CD14-positive monocyte (primary cell): ENCODE measurements at regions of chr1 and their contacts with region 1.

Region 1: GRCh38 chr1:235415008-235415904 is 48.0 kb downstream of the TBCE start:
- DNase-seq: peak; percentile 40 to 57 (median 54)
- H3K4me3 ChIP-seq: no peak overlapping the region
- H3K4me3 Mint-ChIP-seq: no peak overlapping the region
- H3K27ac ChIP-seq: no peak overlapping the region
- H3K27ac Mint-ChIP-seq: no peak overlapping the region
- H3K4me1 ChIP-seq: no peaks in the 10 kb centered on the region
- H3K4me1 Mint-ChIP-seq: peaks cover 6% of the 10 kb centered on the region
- H3K27me3 ChIP-seq: no peaks in the 10 kb centered on the region
- H3K27me3 Mint-ChIP-seq: no peaks in the 10 kb centered on the region
- CTCF ChIP-seq: peak; percentile 88

Region 2: GRCh38 chr1:234486498-234487448 is 928.5 kb before region 1 on chr1:
- intact Hi-C with region 1: loop called in 1 of 2 experiments (anchors 10 kb)
- DNase-seq: peak; percentile 26 to 55 (median 54)
- H3K4me3 ChIP-seq: no peak overlapping the region
- H3K4me3 Mint-ChIP-seq: no peak overlapping the region
- H3K27ac ChIP-seq: no peak overlapping the region
- H3K27ac Mint-ChIP-seq: no peak overlapping the region
- H3K4me1 ChIP-seq: peaks cover 31 to 33% of the 10 kb centered on the region in 2 donors
- H3K4me1 Mint-ChIP-seq: peaks cover 32% of the 10 kb centered on the region
- H3K27me3 ChIP-seq: no peaks in the 10 kb centered on the region
- H3K27me3 Mint-ChIP-seq: peaks cover 0 to 9% (median 5%) of the 10 kb centered on the region in 3 donors
- CTCF ChIP-seq: peak; percentile 68

Region 3: GRCh38 chr1:235105051-235106043 is 309.9 kb before region 1 on chr1:
- intact Hi-C with region 1: loop called in 1 of 2 experiments (anchors 10 kb)
- DNase-seq: no peak
- H3K4me3 ChIP-seq: no peak overlapping the region
- H3K4me3 Mint-ChIP-seq: no peak overlapping the region
- H3K27ac ChIP-seq: no peak overlapping the region
- H3K27ac Mint-ChIP-seq: no peak overlapping the region
- H3K4me1 ChIP-seq: peaks cover 7 to 9% of the 10 kb centered on the region in 2 donors
- H3K4me1 Mint-ChIP-seq: peaks cover 22% of the 10 kb centered on the region
- H3K27me3 ChIP-seq: no peaks in the 10 kb centered on the region
- H3K27me3 Mint-ChIP-seq: peaks cover 2 to 8% (median 3%) of the 10 kb centered on the region in 3 donors
- CTCF ChIP-seq: no peak

Region 4: DNA sequence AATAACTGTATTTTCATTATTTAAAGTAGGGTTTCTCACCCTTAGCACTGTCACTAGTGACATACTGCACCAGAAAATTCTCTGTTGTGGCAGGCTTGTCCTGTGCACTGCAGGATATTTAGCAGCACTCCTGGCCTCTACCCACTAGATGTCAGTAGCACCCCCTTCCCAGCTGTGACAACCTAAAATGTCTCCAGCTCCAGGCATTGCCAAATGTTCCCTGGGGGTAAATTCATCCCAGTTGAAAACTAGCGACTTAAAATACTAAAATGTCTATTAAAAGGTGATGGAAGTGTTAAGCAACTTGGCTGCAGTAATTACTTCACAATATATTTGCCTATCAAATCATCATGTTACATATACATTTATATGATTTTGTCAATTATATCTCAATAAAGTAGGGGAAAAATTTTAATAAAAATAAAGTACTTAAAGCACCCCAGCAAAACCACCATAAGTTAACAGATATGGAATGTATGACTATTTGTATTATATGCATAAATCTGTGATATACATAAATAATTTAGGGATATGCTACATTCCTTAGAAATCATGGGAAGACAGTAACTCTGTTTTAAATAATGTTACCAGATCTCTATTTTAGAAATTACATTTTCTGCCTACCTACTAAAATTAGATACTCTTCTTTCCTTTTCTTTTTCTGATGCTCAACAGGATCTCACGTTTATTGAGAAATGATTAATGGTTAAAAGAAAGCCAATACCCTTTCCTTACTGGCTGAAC is 161.9 kb before region 1 on chr1:
- intact Hi-C with region 1: loop called (anchors 2 to 5 kb)
- DNase-seq: peak; percentile 27 to 60 (median 46)
- H3K4me3 ChIP-seq: no peak overlapping the region
- H3K4me3 Mint-ChIP-seq: no peak overlapping the region
- H3K27ac ChIP-seq: no peak overlapping the region
- H3K27ac Mint-ChIP-seq: peak overlapping the region in 1 of 7 donors; percentile 38
- H3K4me1 ChIP-seq: no peaks in the 10 kb centered on the region
- H3K4me1 Mint-ChIP-seq: peaks cover 3% of the 10 kb centered on the region
- H3K27me3 ChIP-seq: no peaks in the 10 kb centered on the region
- H3K27me3 Mint-ChIP-seq: no peaks in the 10 kb centered on the region
- CTCF ChIP-seq: peak; percentile 77

Region 5: DNA sequence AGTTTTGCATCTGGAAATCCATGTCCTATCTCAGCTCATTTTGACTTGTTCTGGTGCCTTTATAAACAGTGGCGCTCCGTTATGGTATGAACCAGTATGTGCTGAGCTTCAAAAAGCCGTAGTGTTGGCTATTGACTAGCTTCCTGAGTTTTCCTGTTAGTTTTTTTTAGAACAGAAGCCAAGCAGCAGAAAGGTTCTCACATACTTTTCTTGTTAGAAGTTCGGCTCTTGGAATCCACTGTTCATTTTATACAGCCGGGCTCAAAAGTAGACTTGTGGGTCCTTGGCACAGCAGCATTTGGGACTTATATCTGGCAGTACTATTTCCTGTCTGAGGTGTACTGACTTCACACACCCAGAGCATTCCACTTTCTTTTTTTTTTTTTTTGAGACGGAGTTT is 15.7 kb after region 1 on chr1:
- intact Hi-C with region 1: no loop called
- DNase-seq: no peak
- H3K4me3 ChIP-seq: no peak overlapping the region
- H3K4me3 Mint-ChIP-seq: no peak overlapping the region
- H3K27ac ChIP-seq: no peak overlapping the region
- H3K27ac Mint-ChIP-seq: no peak overlapping the region
- H3K4me1 ChIP-seq: no peaks in the 10 kb centered on the region
- H3K4me1 Mint-ChIP-seq: no peaks in the 10 kb centered on the region
- H3K27me3 ChIP-seq: no peaks in the 10 kb centered on the region
- H3K27me3 Mint-ChIP-seq: peaks cover 0 to 2% (median 0%) of the 10 kb centered on the region in 3 donors
- CTCF ChIP-seq: no peak